GM12878 (cell line): ENCODE measurements at regions of chr6 and their contacts with region 1.

Region 1: GRCh38 chr6:42390228-42390934 is 61.3 kb downstream of the TRERF1 start:
- DNase-seq: no peak
- ATAC-seq: peak; percentile 82
- H3K4me3 ChIP-seq: peak overlapping the region; percentile 42; the same call in 1 of the 2 replicates
- H3K27ac ChIP-seq: peak overlapping the region; percentile 76
- H3K4me1 ChIP-seq: peaks cover 47% of the 10 kb centered on the region
- H3K27me3 ChIP-seq: no peaks in the 10 kb centered on the region
- CTCF ChIP-seq: no peak
- EP300 ChIP-seq: peak; percentile 32 to 42; a peak in 2 of 4 replicates
- POLR2A ChIP-seq: 0 out of 2 replicates have a peak, but pooled peaks have one; percentile 28
- RAD21 ChIP-seq: 0 out of 2 replicates have a peak, but pooled peaks have one; percentile 3

Region 2: DNA sequence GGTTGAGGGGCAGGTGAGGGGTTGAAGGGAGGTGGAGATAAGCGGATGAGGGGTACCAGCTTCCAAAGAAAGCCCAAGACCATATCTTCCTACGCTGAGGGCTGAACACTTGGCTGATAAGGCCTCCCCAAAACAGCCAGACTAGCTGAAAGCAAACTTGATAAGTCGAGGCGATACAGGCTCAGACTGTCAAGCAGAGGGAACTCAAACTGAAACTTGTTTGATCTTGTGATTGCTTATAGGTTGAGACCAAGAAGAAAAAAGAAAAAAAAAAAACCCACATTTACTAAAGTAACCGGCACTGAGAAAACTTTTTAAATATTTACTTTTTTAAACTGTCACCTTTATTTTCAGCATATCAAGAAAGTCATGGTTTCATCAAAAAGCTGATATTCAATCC is 12.3 kb before region 1 on chr6:
- CTCF ChIA-PET with region 1: interaction called, 12 read pairs
- POLR2A ChIA-PET with region 1: interaction called, 19 read pairs
- RAD21 ChIA-PET with region 1: interaction called, 27 read pairs
- SMC1A ChIA-PET with region 1: interaction called, 40 read pairs
- in situ Hi-C with region 1: no loop called
- intact Hi-C with region 1: no loop called
- DNase-seq: no peak
- ATAC-seq: peak; percentile 78
- H3K4me3 ChIP-seq: no peak overlapping the region
- H3K27ac ChIP-seq: peak overlapping the region; percentile 56
- H3K4me1 ChIP-seq: peaks cover 37% of the 10 kb centered on the region
- H3K27me3 ChIP-seq: no peaks in the 10 kb centered on the region
- CTCF ChIP-seq: no peak
- EP300 ChIP-seq: no peak
- POLR2A ChIP-seq: no peak
- RAD21 ChIP-seq: no peak

Region 3: DNA sequence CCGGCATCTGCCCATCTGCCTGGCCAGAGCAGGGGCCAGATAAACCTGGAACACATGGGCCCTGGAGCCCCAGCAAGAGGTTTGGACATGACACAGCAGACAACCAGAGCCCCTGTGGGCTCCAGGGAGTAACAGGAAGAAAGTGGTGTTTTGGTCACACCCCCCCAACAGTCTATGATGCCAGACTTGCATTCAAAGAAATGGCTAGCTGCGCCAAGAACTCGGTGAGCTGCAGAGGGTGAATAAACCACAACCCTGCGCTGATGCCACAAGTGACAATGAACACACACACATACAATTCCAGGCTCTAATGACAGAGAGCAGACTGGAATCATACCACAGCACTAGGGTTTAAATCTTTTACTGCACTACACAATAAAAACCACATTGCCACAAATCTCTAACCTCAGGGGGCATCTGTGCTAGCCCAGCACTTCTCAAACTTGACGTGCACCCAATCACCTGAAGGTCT is 27.3 kb after region 1 on chr6:
- CTCF ChIA-PET with region 1: interaction called, 10 read pairs
- POLR2A ChIA-PET with region 1: interaction called, 10 read pairs
- RAD21 ChIA-PET with region 1: interaction called, 11 read pairs
- SMC1A ChIA-PET with region 1: interaction called, 7 read pairs
- in situ Hi-C with region 1: no loop called
- intact Hi-C with region 1: no loop called
- DNase-seq: no peak
- ATAC-seq: peak; percentile 25
- H3K4me3 ChIP-seq: no peak overlapping the region
- H3K27ac ChIP-seq: no peak overlapping the region
- H3K4me1 ChIP-seq: peaks cover 12% of the 10 kb centered on the region
- H3K27me3 ChIP-seq: no peaks in the 10 kb centered on the region
- CTCF ChIP-seq: no peak
- EP300 ChIP-seq: no peak
- POLR2A ChIP-seq: no peak
- RAD21 ChIP-seq: no peak

Region 4: GRCh38 chr6:42428326-42429041 is 38.1 kb after region 1 on chr6:
- CTCF ChIA-PET with region 1: interaction called, 11 read pairs
- POLR2A ChIA-PET with region 1: interaction called, 10 read pairs
- RAD21 ChIA-PET with region 1: interaction called, 18 read pairs
- SMC1A ChIA-PET with region 1: interaction called, 25 read pairs
- in situ Hi-C with region 1: no loop called
- intact Hi-C with region 1: no loop called
- DNase-seq: no peak
- ATAC-seq: peak; percentile 88
- H3K4me3 ChIP-seq: no peak overlapping the region
- H3K27ac ChIP-seq: peak overlapping the region; percentile 71
- H3K4me1 ChIP-seq: peaks cover 55% of the 10 kb centered on the region
- H3K27me3 ChIP-seq: no peaks in the 10 kb centered on the region
- CTCF ChIP-seq: no peak
- EP300 ChIP-seq: no peak
- POLR2A ChIP-seq: no peak
- RAD21 ChIP-seq: no peak; the same call in 1 of the 2 replicates

Region 5: DNA sequence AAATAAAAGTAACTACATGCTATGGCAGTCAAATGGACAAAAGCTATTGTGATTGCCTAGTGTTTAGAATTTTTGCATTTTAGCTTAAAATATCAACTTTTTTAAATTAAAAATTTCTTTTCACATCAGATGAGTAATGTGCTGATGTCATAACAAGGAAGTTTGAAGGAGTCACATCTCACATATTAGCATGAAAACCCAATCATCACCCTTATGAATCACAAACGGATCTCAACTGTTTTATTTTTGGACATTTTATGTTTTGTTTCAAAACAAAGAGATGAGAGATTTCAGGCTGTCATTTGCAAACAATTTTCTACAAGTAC is 115.0 kb after region 1 on chr6:
- CTCF ChIA-PET with region 1: interaction called, 5 read pairs
- POLR2A ChIA-PET with region 1: interaction called, 6 read pairs
- RAD21 ChIA-PET with region 1: interaction called, 24 read pairs
- SMC1A ChIA-PET with region 1: interaction called, 40 read pairs
- in situ Hi-C with region 1: no loop called
- intact Hi-C with region 1: no loop called
- DNase-seq: no peak
- ATAC-seq: peak; percentile 36
- H3K4me3 ChIP-seq: no peak overlapping the region
- H3K27ac ChIP-seq: peak overlapping the region; percentile 54
- H3K4me1 ChIP-seq: peaks cover 52% of the 10 kb centered on the region
- H3K27me3 ChIP-seq: no peaks in the 10 kb centered on the region
- CTCF ChIP-seq: no peak
- EP300 ChIP-seq: no peak
- POLR2A ChIP-seq: no peak
- RAD21 ChIP-seq: no peak

Region 6: GRCh38 chr6:42532038-42532669 is 141.8 kb after region 1 on chr6:
- CTCF ChIA-PET with region 1: interaction called, 18 read pairs
- POLR2A ChIA-PET with region 1: no interaction called
- RAD21 ChIA-PET with region 1: interaction called, 3 read pairs
- SMC1A ChIA-PET with region 1: interaction called, 10 read pairs
- in situ Hi-C with region 1: no loop called
- intact Hi-C with region 1: no loop called
- DNase-seq: no peak
- ATAC-seq: peak; percentile 92
- H3K4me3 ChIP-seq: no peak overlapping the region
- H3K27ac ChIP-seq: no peak overlapping the region
- H3K4me1 ChIP-seq: no peaks in the 10 kb centered on the region
- H3K27me3 ChIP-seq: no peaks in the 10 kb centered on the region
- CTCF ChIP-seq: peak; percentile 74 to 89 (median 75)
- EP300 ChIP-seq: no peak
- POLR2A ChIP-seq: no peak
- RAD21 ChIP-seq: peak; percentile 84

Region 7: GRCh38 chr6:43021270-43022047 is 631.1 kb after region 1 on chr6 and contains the start of gene RRP36:
- CTCF ChIA-PET with region 1: no interaction called
- POLR2A ChIA-PET with region 1: no interaction called
- RAD21 ChIA-PET with region 1: no interaction called
- SMC1A ChIA-PET with region 1: no interaction called
- in situ Hi-C with region 1: no loop called
- intact Hi-C with region 1: no loop called
- DNase-seq: no peak
- ATAC-seq: peak; percentile 98
- H3K4me3 ChIP-seq: peak within 1 kb of the TSS; percentile 100
- H3K27ac ChIP-seq: peak within 1 kb of the TSS; percentile 77
- H3K4me1 ChIP-seq: peaks cover 14% of the 10 kb centered on the region
- H3K27me3 ChIP-seq: no peaks in the 10 kb centered on the region
- CTCF ChIP-seq: no peak
- EP300 ChIP-seq: no peak
- POLR2A ChIP-seq: peak; percentile 83
- RAD21 ChIP-seq: no peak
- polyA plus RNA-seq, gene RRP36: 17.6 to 34.7 TPM